ENCODE measurements at regions of chr17 and their contacts with region 1.

Region 1: GRCh38 chr17:50949989-50950881 is 84.1 kb upstream of the TOB1 start:
- DNase-seq: peak; percentile 82 to 88 (median 84)
- ATAC-seq: peak; percentile 76
- H3K4me3 ChIP-seq: no peak overlapping the region
- H3K4me1 ChIP-seq: peaks cover 55% of the 10 kb centered on the region
- CTCF ChIP-seq: peak; percentile 76

Region 2: DNA sequence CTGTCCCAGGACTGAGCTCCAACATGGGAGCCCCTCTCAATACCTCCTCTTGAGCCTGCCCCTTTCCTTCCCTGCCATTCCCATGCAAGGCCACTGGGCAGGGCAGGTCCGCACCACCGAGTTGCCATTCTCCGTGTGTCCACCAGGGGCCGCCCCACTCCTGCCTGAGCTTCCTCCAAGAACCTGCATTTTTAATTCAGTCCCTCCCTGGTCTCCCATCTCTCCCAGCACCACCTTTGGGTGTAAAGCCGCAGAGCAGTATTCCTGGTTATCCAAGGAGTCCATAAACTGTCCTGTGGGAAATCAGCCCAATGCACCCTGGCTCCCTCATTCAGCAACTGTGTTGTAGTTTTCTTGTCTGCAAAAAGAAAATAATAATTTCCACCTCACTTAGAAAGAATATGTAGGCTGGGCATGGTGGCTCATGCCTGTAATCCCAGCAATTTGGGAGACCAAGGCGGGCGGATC is 167.0 kb before region 1 on chr17:
- intact Hi-C with region 1: loop called in 1 of 2 experiments (anchors 10 kb)
- DNase-seq: peak; percentile 87 to 92 (median 89)
- ATAC-seq: peak; percentile 99
- H3K4me3 ChIP-seq: no peak overlapping the region
- H3K4me1 ChIP-seq: no peaks in the 10 kb centered on the region
- CTCF ChIP-seq: peak; percentile 94

Region 3: GRCh38 chr17:50841949-50842354 is 108.3 kb before region 1 on chr17:
- intact Hi-C with region 1: no loop called
- DNase-seq: peak in 2 of 3 donors; percentile 86
- ATAC-seq: peak; percentile 89
- H3K4me3 ChIP-seq: no peak overlapping the region
- H3K4me1 ChIP-seq: peaks cover 5% of the 10 kb centered on the region
- CTCF ChIP-seq: peak; percentile 73

Region 4: GRCh38 chr17:50853015-50853615 is 97.1 kb before region 1 on chr17:
- intact Hi-C with region 1: loop called (anchors 5 kb)
- DNase-seq: no peak
- ATAC-seq: no peak
- H3K4me3 ChIP-seq: no peak overlapping the region
- H3K4me1 ChIP-seq: peaks cover 28% of the 10 kb centered on the region
- CTCF ChIP-seq: no peak

Region 5: GRCh38 chr17:50865984-50866774 is 84.1 kb before region 1 on chr17 and contains the start of gene TOB1:
- intact Hi-C with region 1: loop called in 1 of 2 experiments (anchors 5 kb)
- DNase-seq: peak; percentile 97 to 99 (median 99)
- ATAC-seq: peak; percentile 79
- H3K4me3 ChIP-seq: peak within 1 kb of the TSS; percentile 95
- H3K4me1 ChIP-seq: peaks cover 26% of the 10 kb centered on the region
- CTCF ChIP-seq: no peak
- total RNA-seq, gene TOB1: 120 to 156 (median 128) TPM

Region 6: GRCh38 chr17:51015145-51015558 is 64.9 kb after region 1 on chr17:
- intact Hi-C with region 1: no loop called
- DNase-seq: no peak
- ATAC-seq: no peak
- H3K4me3 ChIP-seq: no peak overlapping the region
- H3K4me1 ChIP-seq: no peaks in the 10 kb centered on the region
- CTCF ChIP-seq: no peak

Region 7: GRCh38 chr17:51056813-51057510 is 106.7 kb after region 1 on chr17:
- intact Hi-C with region 1: no loop called
- DNase-seq: peak in 1 of 3 donors; percentile 54
- ATAC-seq: peak; percentile 65
- H3K4me3 ChIP-seq: no peak overlapping the region
- H3K4me1 ChIP-seq: no peaks in the 10 kb centered on the region
- CTCF ChIP-seq: no peak

Region 8: GRCh38 chr17:51071556-51071955 is 121.3 kb after region 1 on chr17:
- intact Hi-C with region 1: no loop called
- DNase-seq: no peak
- ATAC-seq: no peak
- H3K4me3 ChIP-seq: no peak overlapping the region
- H3K4me1 ChIP-seq: no peaks in the 10 kb centered on the region
- CTCF ChIP-seq: no peak

Measured in mucosa of descending colon (tissue), 3 donors.